ENCODE measurements at regions of chr5 and their contacts with region 1.

Region 1: DNA sequence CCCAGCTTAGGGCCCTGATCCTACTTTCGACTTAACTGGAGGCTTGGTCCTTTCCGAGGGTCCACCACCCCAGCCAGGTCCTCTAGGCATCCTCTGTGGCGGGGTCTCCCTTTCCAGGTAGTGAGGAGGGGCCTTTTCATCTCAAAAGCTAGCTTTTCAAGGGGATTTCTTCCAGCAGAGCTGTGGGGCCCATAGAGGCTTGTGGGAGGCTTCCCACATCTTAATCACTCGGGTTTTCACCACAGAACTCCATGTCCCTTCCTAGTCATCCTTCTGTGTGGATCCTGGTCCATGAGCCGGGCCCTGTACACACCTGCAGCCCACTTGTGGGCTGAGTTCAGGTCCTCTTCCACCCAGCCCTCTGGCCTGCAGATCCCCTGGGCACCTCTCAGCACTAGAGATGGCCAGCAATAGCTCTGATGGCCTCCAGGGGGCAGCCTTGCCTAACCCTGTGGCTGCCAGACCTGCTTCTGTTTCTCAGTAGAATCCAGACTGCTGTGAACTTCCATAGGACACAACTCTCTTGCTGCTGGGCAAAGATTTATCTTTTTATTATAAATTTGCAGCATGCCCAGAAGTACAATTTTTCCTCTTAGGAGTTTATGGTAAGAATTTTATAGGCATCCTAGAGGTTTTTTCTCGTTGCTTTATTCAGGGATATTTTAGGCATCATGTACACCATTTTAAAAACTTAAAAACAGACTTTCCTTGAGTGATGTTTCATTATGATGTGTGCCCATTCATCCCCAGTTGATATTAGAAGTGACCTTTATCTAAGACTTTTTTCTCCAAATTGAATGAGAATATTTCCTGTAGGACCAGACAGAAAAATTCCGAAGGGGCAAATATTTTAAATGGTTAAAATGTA is 208.9 kb downstream of the TRIO start:
- DNase-seq: peak; percentile 52
- ATAC-seq: peak; percentile 98
- H3K4me3 Mint-ChIP-seq: no peak overlapping the region
- H3K27ac Mint-ChIP-seq: no peak overlapping the region
- H3K4me1 Mint-ChIP-seq: peaks cover 26% of the 10 kb centered on the region
- H3K27me3 Mint-ChIP-seq: no peaks in the 10 kb centered on the region
- CTCF ChIP-seq: peak; percentile 87

Region 2: DNA sequence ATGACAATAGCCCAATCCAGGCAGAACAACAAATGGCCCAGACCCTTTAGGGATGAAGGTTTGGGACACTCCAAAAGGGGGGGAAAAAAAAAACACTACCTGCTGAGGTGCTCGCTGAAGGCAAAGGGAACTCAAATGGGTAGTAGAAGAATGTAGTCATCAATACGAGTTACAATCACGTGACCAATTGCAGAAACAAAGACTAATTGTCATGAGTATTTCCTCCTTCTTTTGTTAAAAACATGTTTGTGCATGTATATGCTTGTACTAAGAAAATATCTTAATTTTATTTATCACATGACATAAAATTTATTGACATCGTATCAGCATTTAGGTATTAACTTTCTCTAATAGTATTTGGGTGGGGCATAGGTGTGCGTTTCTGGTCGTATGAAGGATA is 1151.1 kb before region 1 on chr5:
- CTCF ChIA-PET with region 1: no interaction called
- POLR2A ChIA-PET with region 1: no interaction called
- intact Hi-C with region 1: no loop called
- DNase-seq: no peak
- ATAC-seq: no peak
- H3K4me3 Mint-ChIP-seq: no peak overlapping the region
- H3K27ac Mint-ChIP-seq: no peak overlapping the region
- H3K4me1 Mint-ChIP-seq: no peaks in the 10 kb centered on the region
- H3K27me3 Mint-ChIP-seq: no peaks in the 10 kb centered on the region
- CTCF ChIP-seq: no peak

Region 3: DNA sequence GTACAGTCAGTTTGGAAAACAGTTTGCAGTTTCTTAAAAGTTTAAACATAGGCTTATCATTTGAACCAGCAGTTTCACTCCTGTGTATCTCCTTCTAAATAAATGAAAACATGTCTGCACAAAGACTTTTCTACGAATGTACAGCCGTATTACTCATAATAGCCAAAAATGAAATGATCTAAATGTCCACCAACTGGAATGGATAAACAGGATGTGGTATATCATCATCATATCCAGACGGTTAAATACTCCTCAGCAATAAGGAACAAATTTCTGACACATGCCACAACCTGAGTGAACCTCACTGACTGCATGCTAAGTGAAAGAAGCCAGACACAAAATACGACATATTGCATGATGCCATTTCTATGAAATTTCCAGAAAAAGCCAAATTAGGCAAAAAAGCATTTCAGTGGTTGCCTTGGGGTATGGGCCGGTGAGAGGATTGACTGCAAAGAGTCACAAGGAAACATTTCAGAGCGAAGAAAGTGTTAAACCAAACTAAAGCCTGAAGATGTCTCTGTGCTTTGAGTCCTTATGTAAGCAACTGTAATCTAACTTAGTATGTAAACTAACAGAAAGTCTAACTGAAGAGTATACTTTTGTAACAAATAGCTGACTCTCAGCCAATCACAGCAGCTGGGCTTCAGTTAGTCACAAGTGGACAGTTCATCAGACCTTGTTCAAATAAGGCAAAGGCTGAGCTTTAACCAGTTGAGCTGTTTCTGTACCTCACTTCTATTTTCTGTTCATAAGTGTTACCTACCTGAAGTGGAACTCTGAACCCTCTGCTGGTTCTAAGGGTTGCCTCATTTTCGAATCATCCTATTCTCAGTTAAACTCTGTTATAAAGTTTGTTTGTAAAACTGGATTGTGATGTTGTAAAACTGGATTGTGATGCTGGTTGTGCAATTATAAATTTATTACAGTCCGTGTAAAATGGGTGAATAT is 143.7 kb before region 1 on chr5:
- CTCF ChIA-PET with region 1: no interaction called
- POLR2A ChIA-PET with region 1: no interaction called
- intact Hi-C with region 1: no loop called
- DNase-seq: no peak
- ATAC-seq: peak; percentile 29
- H3K4me3 Mint-ChIP-seq: peak overlapping the region; percentile 62
- H3K27ac Mint-ChIP-seq: peak overlapping the region; percentile 90
- H3K4me1 Mint-ChIP-seq: peaks cover 88% of the 10 kb centered on the region
- H3K27me3 Mint-ChIP-seq: no peaks in the 10 kb centered on the region
- CTCF ChIP-seq: no peak

Region 4: DNA sequence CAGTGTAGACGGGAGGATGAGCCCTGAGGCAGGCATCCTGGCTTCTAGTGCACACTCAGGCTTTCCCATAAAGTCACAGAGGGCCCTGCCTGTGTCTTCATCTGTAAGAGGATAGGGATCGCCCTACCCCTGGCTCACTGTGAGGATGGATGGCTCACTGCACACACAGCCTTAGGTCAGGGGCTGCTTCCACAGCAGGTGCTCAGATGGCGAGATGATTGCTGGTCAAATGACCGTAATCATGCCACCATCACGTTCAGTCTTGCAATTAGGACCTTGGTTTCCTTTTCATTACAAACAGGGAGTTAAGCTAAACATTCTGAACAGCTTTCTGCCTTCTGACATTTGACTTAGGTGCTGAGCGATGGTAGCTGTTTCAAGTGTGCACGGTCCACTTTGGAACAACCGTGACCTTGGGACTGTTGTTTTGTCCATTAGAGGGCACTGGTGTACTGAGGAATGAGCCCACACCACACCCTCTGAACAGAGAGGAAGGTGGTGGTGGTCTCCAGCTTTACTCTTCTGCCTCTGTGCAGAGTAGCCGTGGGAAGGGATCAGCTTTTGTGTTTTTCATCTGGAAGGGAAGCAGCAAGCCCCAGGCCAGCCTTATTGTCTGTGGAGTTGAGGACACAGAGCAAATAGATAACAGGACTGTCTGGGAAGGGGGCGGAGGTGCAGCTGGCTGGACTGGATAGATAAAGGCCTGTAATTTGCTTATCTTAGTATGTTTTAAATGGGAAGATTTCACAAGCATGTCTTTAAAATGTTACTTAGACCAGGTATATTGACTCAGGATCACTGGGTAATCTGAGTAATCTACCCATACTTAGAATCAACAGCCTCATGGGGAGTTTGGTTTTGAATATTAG is 25.8 kb before region 1 on chr5:
- CTCF ChIA-PET with region 1: interaction called, 18 read pairs
- POLR2A ChIA-PET with region 1: no interaction called
- intact Hi-C with region 1: loop called (anchors 1 kb)
- DNase-seq: no peak
- ATAC-seq: peak; percentile 53
- H3K4me3 Mint-ChIP-seq: no peak overlapping the region
- H3K27ac Mint-ChIP-seq: peak overlapping the region; percentile 0
- H3K4me1 Mint-ChIP-seq: peaks cover 34% of the 10 kb centered on the region
- H3K27me3 Mint-ChIP-seq: no peaks in the 10 kb centered on the region
- CTCF ChIP-seq: no peak

Region 5: DNA sequence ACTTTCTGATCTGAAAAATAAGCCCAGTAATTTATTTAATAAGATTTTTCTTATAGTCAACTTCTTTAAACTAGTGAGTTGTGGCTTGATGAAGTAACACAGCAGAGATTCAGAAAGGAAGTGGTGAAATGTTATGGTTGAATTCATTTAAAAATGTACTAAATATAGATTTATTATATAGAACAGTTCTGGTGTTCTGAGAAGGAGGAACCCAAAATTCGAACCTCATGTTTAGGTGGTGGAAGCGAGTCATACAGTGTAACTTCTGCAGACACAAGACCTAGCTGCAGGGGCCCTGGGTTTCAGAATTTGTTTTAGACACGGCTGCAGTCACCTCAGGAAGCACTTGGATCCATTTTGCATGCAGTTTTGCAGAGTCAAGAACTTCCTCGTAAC is 20.7 kb before region 1 on chr5:
- CTCF ChIA-PET with region 1: interaction called, 18 read pairs
- POLR2A ChIA-PET with region 1: no interaction called
- intact Hi-C with region 1: loop called (anchors 1 kb)
- DNase-seq: no peak
- ATAC-seq: peak; percentile 92
- H3K4me3 Mint-ChIP-seq: peak overlapping the region; percentile 74
- H3K27ac Mint-ChIP-seq: peak overlapping the region; percentile 89
- H3K4me1 Mint-ChIP-seq: peaks cover 57% of the 10 kb centered on the region
- H3K27me3 Mint-ChIP-seq: no peaks in the 10 kb centered on the region
- CTCF ChIP-seq: no peak

Region 6: GRCh38 chr5:14364576-14365472 is 12.7 kb after region 1 on chr5:
- CTCF ChIA-PET with region 1: interaction called, 12 read pairs
- POLR2A ChIA-PET with region 1: no interaction called
- intact Hi-C with region 1: loop called (anchors 1 kb)
- DNase-seq: no peak
- ATAC-seq: no peak
- H3K4me3 Mint-ChIP-seq: no peak overlapping the region
- H3K27ac Mint-ChIP-seq: no peak overlapping the region
- H3K4me1 Mint-ChIP-seq: peaks cover 19% of the 10 kb centered on the region
- H3K27me3 Mint-ChIP-seq: no peaks in the 10 kb centered on the region
- CTCF ChIP-seq: no peak

Region 7: DNA sequence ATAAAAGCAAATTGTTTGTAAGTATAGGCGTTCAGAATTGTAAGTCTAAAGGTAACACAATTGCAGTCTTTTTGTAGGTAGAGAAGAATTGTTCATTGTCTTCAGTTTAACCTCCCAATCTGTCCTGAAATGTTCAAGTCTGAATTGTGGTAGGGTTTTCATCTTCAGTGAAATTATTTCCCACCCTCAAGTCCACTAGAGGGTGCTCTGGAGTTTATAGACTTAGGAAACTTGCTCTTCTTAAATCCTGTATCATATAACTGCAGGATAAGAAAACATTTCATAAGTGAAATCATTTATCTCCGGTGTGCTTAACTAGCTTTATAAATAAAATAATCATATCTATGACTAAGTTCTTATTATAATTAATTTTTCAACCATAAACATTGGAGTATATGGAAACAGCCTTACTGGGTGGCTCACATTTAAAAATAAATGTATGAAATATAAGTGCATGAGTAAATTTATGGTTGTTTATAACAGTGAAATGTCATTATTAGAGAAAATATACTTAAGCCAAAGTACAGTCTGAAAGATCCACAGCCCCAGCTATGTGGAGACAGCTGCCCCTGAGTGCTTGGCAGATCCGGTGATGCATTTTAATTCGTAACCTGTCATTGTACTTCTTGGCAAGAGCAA is 47.1 kb after region 1 on chr5:
- CTCF ChIA-PET with region 1: no interaction called
- POLR2A ChIA-PET with region 1: no interaction called
- intact Hi-C with region 1: loop called (anchors 5 kb)
- DNase-seq: no peak
- ATAC-seq: no peak
- H3K4me3 Mint-ChIP-seq: no peak overlapping the region
- H3K27ac Mint-ChIP-seq: no peak overlapping the region
- H3K4me1 Mint-ChIP-seq: no peaks in the 10 kb centered on the region
- H3K27me3 Mint-ChIP-seq: no peaks in the 10 kb centered on the region
- CTCF ChIP-seq: peak; percentile 23

Region 8: DNA sequence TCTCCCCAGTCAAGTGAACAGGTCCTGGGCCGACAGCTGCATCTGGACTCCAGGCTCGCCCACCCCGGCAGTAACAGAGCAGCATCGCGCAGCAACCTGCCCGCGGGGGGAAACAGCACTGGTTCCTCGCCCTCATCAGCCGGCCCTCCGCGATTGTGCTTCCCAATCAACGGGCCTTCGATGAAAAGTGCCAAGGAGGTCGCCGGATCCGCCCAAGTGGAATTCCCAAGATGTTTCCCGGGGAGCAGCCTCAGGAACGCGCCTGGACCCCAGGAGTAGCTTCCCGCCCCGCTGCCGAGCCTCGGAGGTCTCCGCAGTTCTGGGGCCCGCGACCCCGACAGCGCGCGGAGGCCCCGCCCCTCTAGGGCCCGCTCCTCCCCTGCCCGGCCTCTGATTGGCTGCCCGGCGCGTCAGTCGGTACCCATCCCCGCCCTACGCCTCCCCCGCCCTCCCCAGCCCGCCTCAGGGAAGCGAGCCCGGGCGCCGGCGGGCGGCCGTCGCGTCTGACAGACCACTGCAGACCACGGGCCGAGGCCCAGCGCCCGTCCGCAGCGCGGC is 229.3 kb after region 1 on chr5 and contains the start of gene OTULINL:
- CTCF ChIA-PET with region 1: no interaction called
- POLR2A ChIA-PET with region 1: no interaction called
- intact Hi-C with region 1: loop called (anchors 5 kb)
- DNase-seq: peak; percentile 80
- ATAC-seq: peak; percentile 98
- H3K4me3 Mint-ChIP-seq: peak within 1 kb of the TSS; percentile 74
- H3K27ac Mint-ChIP-seq: no peak within 1 kb of the TSS
- H3K4me1 Mint-ChIP-seq: peaks cover 3% of the 10 kb centered on the region
- H3K27me3 Mint-ChIP-seq: peaks cover 25% of the 10 kb centered on the region
- CTCF ChIP-seq: no peak
- total RNA-seq, gene OTULINL: 0.27 and 0.69 TPM in 2 replicates

Measured in activated B cell treated with CpG ODN at 0.5 μM for 24 hours (primary cell).